Brain microvascular endothelial cell (primary cell): ENCODE measurements at regions of chr10 and their contacts with region 1.

Region 1: GRCh38 chr10:87861953-87862678 is 1.2 kb downstream of the KLLN start:
- DNase-seq: peak; percentile 92
- H3K4me3 ChIP-seq: peak overlapping the region; percentile 89
- H3K27ac ChIP-seq: peak overlapping the region; percentile 95
- H3K27me3 ChIP-seq: no peaks in the 10 kb centered on the region
- CTCF ChIP-seq: no peak

Region 2: DNA sequence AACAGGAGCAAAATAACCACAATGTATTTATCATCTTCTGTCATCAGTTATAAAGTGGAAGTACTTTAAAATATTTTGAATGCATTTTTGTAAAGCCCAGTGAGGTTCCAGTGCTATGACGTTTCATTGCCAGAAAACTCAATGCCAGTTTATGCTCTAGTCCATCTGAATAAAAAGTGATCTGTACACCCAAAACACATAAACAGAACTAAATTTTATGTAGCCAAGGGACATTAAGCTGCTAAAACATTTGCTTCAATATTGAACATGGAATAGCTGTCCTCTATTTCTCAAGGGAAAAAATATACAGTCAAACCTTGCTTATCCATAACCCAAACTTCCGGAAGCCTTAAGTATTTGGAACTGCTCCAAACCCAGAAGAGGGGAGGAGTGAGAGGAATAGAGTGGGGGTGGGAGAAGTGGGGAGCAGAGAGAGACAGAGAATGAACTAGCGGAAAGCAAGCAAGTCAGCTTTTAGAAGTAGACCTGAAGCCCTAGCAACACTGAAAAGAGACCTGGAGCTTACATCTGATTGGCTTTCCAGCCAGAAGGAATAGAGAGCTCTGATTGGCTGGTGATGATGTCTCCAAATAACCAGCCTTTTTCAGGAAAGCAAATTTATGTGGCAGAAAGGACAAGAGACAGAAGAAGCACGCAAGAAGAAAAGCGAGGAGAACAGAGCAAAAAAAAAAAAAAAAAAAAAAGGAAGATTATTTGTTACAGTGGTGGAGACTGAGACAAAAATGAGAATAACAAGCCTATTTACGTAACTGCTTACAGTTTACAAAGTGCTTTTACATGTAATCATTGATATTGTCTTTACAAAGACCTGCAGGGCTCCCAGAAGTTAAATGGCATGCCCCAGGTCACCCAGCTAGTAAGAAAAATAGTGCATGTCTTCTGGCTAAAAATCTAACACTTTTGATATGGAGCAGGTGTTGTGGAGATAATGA is 525.0 kb after region 1 on chr10:
- in situ Hi-C with region 1: loop called (anchors 25 kb)
- DNase-seq: peak; percentile 96
- H3K4me3 ChIP-seq: no peak overlapping the region
- H3K27ac ChIP-seq: peak overlapping the region; percentile 29
- H3K27me3 ChIP-seq: no peaks in the 10 kb centered on the region
- CTCF ChIP-seq: no peak

Region 3: DNA sequence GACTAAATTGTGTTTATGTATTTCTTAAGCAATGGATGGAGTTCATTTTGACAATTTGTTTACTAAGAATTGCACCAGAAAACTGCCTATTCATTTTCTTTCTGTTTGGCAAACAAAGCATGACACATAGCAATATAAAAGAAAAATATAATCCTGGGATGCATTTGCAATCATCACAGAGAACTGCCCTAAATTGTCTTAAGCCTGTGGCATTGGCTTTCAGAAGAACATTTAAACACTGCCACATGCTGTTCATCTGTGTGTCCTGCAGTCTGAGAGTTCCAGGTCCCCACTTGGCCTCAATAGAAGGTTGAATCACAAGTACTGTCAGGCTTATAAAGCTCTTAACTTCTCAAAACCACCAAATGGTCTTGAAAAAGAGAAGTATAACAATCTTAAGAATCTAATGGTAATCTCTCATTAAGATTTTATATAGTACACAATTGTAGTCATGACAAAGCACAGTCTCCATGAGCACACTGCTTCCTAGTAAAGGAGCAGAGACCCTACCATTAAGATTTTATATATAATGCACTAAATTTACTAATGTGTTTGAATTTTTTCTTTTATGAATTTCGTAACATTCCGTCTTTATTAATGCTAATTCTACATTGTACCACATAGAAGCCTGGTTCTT is 691.1 kb after region 1 on chr10:
- in situ Hi-C with region 1: loop called (anchors 25 kb)
- DNase-seq: peak; percentile 75
- H3K4me3 ChIP-seq: no peak overlapping the region
- H3K27ac ChIP-seq: no peak overlapping the region
- H3K27me3 ChIP-seq: no peaks in the 10 kb centered on the region
- CTCF ChIP-seq: peak; percentile 90